GM10248 (cell line): ENCODE measurements at regions of chr10 and their contacts with region 1.

Region 1: GRCh38 chr10:118116715-118117449 is 70.1 kb upstream of the RAB11FIP2 start:
- DNase-seq: no peak
- CTCF ChIP-seq: no peak

Region 2: DNA sequence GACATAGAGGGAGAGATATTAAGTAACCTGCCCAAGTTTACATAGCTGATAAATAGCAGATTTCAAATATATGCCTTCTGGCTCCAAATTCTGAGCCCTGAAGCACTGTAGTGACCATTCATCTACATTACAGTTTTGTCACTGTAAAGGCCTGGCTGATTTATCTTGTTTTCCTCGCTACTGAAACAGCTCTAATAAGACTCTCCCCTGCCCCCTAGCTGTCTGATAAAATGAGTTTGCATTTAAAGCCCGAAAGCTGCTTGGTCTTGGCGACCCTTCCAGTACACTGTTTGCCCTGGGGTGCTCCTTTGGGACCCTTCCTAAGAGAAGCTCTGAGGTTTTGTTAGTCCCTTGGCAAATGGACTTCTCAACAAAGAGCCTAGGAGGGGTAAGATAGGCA is 10.5 kb before region 1 on chr10:
- CTCF ChIA-PET with region 1: interaction called, 14 read pairs
- POLR2A ChIA-PET with region 1: no interaction called
- DNase-seq: peak; percentile 9
- CTCF ChIP-seq: peak; percentile 49